ENCODE measurements at regions of chr4 and their contacts with region 1.

Region 1: DNA sequence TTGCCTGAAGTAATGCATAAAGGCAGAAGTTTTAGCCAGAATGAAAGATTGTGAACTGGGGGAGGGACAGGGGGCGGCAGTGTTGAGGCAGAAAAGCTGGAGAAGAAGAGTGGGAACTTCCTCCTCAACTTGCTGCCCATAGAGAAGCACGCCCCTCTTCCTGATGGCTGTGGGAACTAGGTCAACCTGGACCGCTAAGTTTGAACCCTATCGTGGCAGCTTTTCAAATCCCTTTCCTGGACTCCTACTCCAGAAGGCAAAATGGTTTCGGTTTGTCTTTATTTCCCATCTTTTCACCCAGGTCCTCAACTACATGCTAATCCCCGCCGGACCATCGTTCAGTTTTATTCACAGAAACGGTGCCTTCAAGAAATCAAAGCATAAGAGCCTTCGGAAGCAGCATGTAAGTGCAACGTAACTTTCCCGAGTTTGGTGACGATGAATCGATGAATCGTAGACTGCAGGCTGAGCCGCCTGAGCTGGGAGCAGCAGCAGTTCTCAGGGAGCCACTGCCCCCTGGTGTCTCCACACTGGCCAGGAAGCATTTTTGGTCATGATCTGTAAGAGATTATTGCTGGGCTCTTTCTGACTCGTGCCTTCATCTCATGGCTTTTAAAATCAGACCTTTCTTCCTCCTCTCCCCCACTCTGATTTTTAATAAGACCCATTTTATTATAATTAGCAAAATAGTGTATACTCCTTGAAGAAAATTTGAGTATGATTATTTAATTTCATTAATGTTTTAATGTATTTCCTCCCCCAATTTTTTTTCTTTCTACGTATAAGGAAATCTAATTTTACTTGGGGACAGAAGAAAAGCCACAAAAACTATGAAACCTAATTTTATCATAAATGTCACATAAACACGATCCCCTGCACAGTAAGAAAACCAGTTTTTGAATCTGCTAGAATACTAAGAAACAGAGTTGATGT is 21.4 kb downstream of the SPINK2 start:
- DNase-seq: peak; percentile 80 to 85
- ATAC-seq: peak; percentile 95 to 99 (median 97)
- H3K4me3 ChIP-seq: peak overlapping the region; percentile 33 to 66 (median 64)
- H3K27ac ChIP-seq: peak overlapping the region in 9 of 10 donors; percentile 7 to 74 (median 52)
- H3K4me1 ChIP-seq: peaks cover 0 to 10% (median 3%) of the 10 kb centered on the region in 9 donors
- H3K27me3 ChIP-seq: no peaks in the 10 kb centered on the region
- CTCF ChIP-seq: peak; percentile 66 to 97 (median 91)

Region 2: GRCh38 chr4:56149591-56149990 is 650.5 kb before region 1 on chr4:
- intact Hi-C with region 1: no loop called
- DNase-seq: no peak
- ATAC-seq: no peak
- H3K4me3 ChIP-seq: no peak overlapping the region
- H3K27ac ChIP-seq: no peak overlapping the region
- H3K4me1 ChIP-seq: peaks cover 0 to 4% (median 0%) of the 10 kb centered on the region in 9 donors
- H3K27me3 ChIP-seq: no peaks in the 10 kb centered on the region
- CTCF ChIP-seq: no peak

Region 3: DNA sequence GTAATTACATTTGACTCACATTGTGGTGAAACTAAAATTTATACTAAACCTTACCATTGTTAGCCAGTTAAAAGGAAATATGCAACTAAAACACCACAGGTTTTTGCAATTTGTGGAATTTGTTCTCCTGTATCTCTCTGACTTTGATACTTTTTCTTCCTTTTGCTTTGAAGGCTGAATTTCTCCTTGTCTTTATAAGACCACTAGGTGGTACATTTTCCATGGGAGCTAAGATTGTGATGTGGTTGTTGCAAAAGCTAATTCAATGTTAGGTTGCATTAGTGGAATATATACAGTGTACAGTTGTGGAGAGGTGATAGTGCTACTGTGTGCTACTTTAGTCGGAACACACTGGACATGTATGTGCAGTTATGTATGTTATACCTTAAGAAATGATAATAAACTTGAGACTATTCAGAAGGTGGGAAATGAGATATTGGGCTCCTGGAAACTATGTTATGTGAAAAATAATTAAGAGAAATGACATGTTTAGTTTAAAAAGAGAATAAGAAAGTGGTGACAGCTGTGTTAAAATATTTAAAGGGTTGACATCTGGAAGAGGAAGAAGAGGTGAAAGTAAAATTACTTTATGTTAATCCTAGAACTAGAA is 224.2 kb before region 1 on chr4:
- intact Hi-C with region 1: loop called (anchors 1 to 10 kb)
- DNase-seq: no peak
- ATAC-seq: peak in 1 of 8 donors; percentile 52
- H3K4me3 ChIP-seq: no peak overlapping the region
- H3K27ac ChIP-seq: no peak overlapping the region
- H3K4me1 ChIP-seq: no peaks in the 10 kb centered on the region
- H3K27me3 ChIP-seq: no peaks in the 10 kb centered on the region
- CTCF ChIP-seq: peak; percentile 24 to 68 (median 52)

Region 4: DNA sequence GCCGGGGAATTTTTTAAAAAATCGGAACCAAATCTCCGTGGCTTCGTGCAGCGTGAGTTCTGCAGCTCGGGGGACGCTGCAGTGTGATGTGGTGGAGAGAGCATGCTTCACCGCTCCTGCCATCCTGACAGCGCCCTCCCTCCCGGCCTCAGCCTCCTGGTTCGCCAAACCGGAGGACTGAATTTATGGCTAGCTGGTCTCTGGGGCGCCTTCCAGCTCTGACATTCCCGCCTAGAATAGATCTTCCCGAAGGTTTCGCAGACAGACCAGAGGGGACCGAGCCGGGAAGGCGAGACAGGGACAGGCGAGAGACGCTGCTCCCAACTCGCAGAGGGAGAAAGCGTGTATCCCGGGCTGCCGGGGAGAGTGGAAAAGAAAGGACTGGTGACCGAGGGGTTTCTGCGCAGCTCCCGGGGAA is 144.9 kb before region 1 on chr4:
- intact Hi-C with region 1: loop called in 3 of 10 experiments (anchors 10 kb)
- DNase-seq: peak; percentile 12 to 14
- ATAC-seq: peak; percentile 43 to 79 (median 66)
- H3K4me3 ChIP-seq: peak overlapping the region; percentile 21 to 62 (median 55)
- H3K27ac ChIP-seq: peak overlapping the region in 2 of 10 donors; percentile 47 to 70
- H3K4me1 ChIP-seq: peaks cover 0 to 40% (median 20%) of the 10 kb centered on the region in 9 donors
- H3K27me3 ChIP-seq: peaks cover 4 to 66% (median 55%) of the 10 kb centered on the region in 7 donors
- CTCF ChIP-seq: no peak

Region 5: GRCh38 chr4:56668298-56668697 is 131.8 kb before region 1 on chr4:
- intact Hi-C with region 1: loop called in 1 of 10 experiments (anchors 10 kb)
- DNase-seq: no peak
- ATAC-seq: no peak
- H3K4me3 ChIP-seq: no peak overlapping the region
- H3K27ac ChIP-seq: no peak overlapping the region
- H3K4me1 ChIP-seq: no peaks in the 10 kb centered on the region
- H3K27me3 ChIP-seq: peaks cover 0 to 11% (median 3%) of the 10 kb centered on the region in 7 donors
- CTCF ChIP-seq: peak in 5 of 9 donors; percentile 5 to 36 (median 19)

Measured in heart right ventricle (tissue), 16 donors.